HEK293 (cell line): ENCODE measurements at regions of chr17 and their contacts with region 1.

Region 1: DNA sequence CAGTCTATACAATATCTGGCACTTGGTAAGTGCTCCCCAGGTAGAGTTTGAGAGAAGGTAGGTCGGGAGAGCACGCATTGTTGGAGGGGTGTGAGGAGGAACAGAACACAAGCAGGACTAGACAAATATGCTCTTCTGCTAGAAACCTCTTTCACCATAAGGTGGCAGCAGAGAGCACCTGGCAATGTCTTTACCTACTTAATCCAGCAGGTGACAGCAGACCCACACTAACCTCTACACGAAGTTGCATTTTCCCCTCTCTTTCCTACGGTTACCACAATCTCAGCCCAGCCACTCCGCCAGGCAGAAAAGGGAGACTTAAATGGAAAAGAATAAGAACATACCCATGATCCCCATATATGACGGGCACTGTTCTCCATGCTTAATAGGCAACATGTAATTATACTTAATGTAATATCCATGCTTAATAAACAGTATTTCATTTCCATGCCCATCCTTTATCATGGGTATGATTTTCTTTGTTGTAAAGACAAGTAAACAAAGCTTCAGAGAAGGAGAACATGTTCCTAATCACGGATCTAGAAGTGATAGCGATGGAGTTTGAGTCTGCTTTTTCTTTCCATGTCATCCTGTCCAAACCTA is 55.1 kb upstream of the CCL2 start:
- H3K4me3 ChIP-seq: no peak overlapping the region
- H3K27ac ChIP-seq: no peak overlapping the region
- H3K4me1 ChIP-seq: no peaks in the 10 kb centered on the region
- CTCF ChIP-seq: peak; percentile 99

Region 2: DNA sequence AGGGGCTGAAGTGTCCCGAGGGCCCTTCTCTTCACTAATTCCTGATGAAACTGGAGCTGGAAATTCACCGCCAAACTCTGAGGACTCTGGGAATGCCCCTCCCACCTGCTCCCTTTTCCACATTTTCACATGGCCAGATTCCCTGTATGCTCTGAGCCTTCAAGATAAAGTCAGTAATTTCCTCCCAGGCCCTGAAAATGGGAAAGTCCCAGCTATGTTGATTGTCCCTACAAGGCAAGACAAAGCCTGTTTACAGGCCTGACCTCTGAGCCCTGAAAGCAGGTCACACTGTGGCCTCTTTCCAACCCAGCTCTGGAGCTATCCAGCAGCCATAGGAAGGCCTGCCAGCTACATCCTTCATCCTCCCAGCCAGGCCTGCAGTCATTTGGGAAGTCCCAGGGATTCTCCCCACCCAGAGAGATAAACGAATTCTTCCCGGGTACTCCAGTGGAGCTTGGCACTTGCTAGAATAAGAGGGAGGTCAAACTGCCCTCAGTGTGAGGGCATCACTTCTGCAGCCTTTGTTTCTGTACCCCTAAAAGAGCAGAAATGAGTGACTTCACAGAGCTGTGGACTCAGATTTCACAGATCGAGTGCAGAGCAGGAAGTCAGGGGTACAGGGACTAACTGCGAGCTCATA is 35.5 kb after region 1 on chr17:
- CTCF ChIA-PET with region 1: interaction called, 21 read pairs
- POLR2A ChIA-PET with region 1: no interaction called
- H3K4me3 ChIP-seq: no peak overlapping the region
- H3K27ac ChIP-seq: no peak overlapping the region
- H3K4me1 ChIP-seq: peaks cover 10% of the 10 kb centered on the region
- CTCF ChIP-seq: no peak

Region 3: DNA sequence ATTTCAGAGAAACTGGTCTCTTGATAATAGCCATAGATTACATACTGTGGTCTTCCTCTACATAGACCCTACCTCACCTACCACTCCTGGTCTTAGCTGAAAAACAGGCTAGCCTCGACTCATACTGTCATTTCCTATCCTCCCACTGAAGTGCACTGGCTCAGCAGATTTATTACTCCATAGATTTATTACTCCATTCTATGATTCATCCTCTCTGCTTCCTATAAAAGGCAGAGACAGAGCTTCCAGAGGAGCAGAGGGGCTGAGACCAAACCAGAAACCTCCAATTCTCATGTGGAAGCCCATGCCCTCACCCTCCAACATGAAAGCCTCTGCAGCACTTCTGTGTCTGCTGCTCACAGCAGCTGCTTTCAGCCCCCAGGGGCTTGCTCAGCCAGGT is 69.9 kb after region 1 on chr17 and contains the start of gene CCL7:
- CTCF ChIA-PET with region 1: interaction called, 11 read pairs
- POLR2A ChIA-PET with region 1: no interaction called
- H3K4me3 ChIP-seq: no peak within 1 kb of the TSS
- H3K27ac ChIP-seq: no peak within 1 kb of the TSS
- H3K4me1 ChIP-seq: no peaks in the 10 kb centered on the region
- CTCF ChIP-seq: no peak

Region 4: DNA sequence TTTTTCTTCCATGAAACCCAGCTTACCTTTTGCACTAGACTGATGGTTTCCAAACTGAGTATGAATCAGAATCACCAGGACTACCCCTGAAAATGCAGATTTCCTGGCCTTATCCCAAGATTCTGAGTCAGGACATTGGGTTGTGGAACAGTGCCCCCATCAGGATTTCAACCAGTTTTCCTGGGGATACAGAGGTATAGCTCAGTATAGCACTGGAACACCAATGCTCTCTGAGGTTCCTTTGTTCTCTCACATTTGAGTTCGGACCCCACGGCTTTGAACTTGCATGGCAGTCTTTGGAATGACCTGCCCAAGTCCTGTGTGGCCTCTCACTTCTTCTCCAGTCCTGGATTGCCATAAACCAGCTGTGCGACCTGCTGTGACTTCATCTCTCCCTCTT is 106.4 kb after region 1 on chr17:
- CTCF ChIA-PET with region 1: interaction called, 105 read pairs
- POLR2A ChIA-PET with region 1: no interaction called
- H3K4me3 ChIP-seq: no peak overlapping the region
- H3K27ac ChIP-seq: no peak overlapping the region
- H3K4me1 ChIP-seq: no peaks in the 10 kb centered on the region
- CTCF ChIP-seq: no peak

Region 5: GRCh38 chr17:34337701-34338100 is 137.7 kb after region 1 on chr17:
- CTCF ChIA-PET with region 1: interaction called, 10 read pairs
- POLR2A ChIA-PET with region 1: no interaction called
- H3K4me3 ChIP-seq: no peak overlapping the region
- H3K27ac ChIP-seq: no peak overlapping the region
- H3K4me1 ChIP-seq: no peaks in the 10 kb centered on the region
- CTCF ChIP-seq: no peak